ENCODE measurements at regions of chr1 and their contacts with region 1.

Region 1: GRCh38 chr1:175023043-175023921 is at the start of gene MRPS14:
- DNase-seq: peak; percentile 93 to 98 (median 97)
- ATAC-seq: peak; percentile 97
- H3K4me3 ChIP-seq: peak within 1 kb of the TSS; percentile 86
- H3K4me3 Mint-ChIP-seq: peak within 1 kb of the TSS; percentile 86 to 97 (median 92)
- H3K27ac ChIP-seq: peak within 1 kb of the TSS; percentile 92
- H3K27ac Mint-ChIP-seq: peak within 1 kb of the TSS; percentile 84 to 98 (median 90)
- H3K4me1 ChIP-seq: peaks cover 6 to 12% of the 10 kb centered on the region in 2 donors
- H3K4me1 Mint-ChIP-seq: peaks cover 23 to 47% (median 36%) of the 10 kb centered on the region in 7 donors
- H3K27me3 ChIP-seq: no peaks in the 10 kb centered on the region
- H3K27me3 Mint-ChIP-seq: no peaks in the 10 kb centered on the region
- total RNA-seq, gene MRPS14: 12.4 to 36.5 (median 31.5) TPM

Region 2: DNA sequence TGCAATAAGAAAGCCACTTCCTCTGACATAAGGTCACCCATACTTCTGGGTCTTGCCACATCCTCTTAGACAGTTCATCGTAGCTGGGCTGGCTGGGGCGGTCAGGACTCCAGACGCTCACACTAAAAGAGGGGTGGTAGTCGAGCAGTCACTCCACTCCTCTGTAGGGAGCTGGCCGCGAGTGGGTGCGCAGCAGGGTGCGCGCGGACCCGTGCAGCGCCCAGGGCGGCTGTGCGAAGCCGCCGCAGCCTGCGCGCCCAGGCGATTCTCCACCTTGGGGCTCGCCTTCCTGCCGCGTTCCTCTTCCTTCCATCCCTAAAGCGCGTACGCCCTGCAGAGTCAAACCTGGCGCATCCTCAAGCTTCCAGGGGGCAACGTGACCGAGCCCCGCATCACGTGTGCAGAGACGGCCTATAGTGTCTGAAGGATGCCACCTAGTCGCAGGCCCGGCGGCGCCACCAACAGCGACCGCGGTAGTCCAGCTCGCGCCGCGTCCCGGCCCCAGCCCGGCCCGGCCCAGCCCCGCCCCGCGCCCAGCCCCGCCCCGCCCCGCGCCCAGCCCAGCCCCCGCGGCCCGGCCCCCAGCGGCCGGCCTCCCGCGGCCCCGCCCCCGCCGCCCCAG is 1546.5 kb before region 1 on chr1:
- CTCF ChIA-PET with region 1: no interaction called
- POLR2A ChIA-PET with region 1: interaction called, 6 read pairs
- intact Hi-C with region 1: loop called in 1 of 2 experiments (anchors 2 kb)
- DNase-seq: peak; percentile 65 to 82 (median 78)
- ATAC-seq: peak; percentile 87
- H3K4me3 ChIP-seq: peak overlapping the region; percentile 92
- H3K4me3 Mint-ChIP-seq: peak overlapping the region; percentile 82 to 94 (median 91)
- H3K27ac ChIP-seq: peak overlapping the region; percentile 78
- H3K27ac Mint-ChIP-seq: peak overlapping the region; percentile 61 to 96 (median 89)
- H3K4me1 ChIP-seq: peaks cover 20 to 31% of the 10 kb centered on the region in 2 donors
- H3K4me1 Mint-ChIP-seq: peaks cover 38 to 72% (median 63%) of the 10 kb centered on the region in 7 donors
- H3K27me3 ChIP-seq: no peaks in the 10 kb centered on the region
- H3K27me3 Mint-ChIP-seq: no peaks in the 10 kb centered on the region

Region 3: GRCh38 chr1:173867753-173868265 is 1155.5 kb before region 1 on chr1 and contains the start of gene GAS5:
- CTCF ChIA-PET with region 1: no interaction called
- POLR2A ChIA-PET with region 1: interaction called, 5 read pairs
- intact Hi-C with region 1: loop called (anchors 1 kb)
- DNase-seq: peak; percentile 88 to 100 (median 99)
- ATAC-seq: peak; percentile 92
- H3K4me3 ChIP-seq: peak within 1 kb of the TSS; percentile 88
- H3K4me3 Mint-ChIP-seq: peak within 1 kb of the TSS; percentile 92 to 98 (median 95)
- H3K27ac ChIP-seq: peak within 1 kb of the TSS; percentile 93
- H3K27ac Mint-ChIP-seq: peak within 1 kb of the TSS; percentile 85 to 99 (median 97)
- H3K4me1 ChIP-seq: peaks cover 42 to 62% of the 10 kb centered on the region in 2 donors
- H3K4me1 Mint-ChIP-seq: peaks cover 50 to 80% (median 66%) of the 10 kb centered on the region in 7 donors
- H3K27me3 ChIP-seq: no peaks in the 10 kb centered on the region
- H3K27me3 Mint-ChIP-seq: peaks cover 0 to 4% (median 0%) of the 10 kb centered on the region in 5 donors
- total RNA-seq, gene GAS5: 371 to 954 (median 885) TPM

Region 4: DNA sequence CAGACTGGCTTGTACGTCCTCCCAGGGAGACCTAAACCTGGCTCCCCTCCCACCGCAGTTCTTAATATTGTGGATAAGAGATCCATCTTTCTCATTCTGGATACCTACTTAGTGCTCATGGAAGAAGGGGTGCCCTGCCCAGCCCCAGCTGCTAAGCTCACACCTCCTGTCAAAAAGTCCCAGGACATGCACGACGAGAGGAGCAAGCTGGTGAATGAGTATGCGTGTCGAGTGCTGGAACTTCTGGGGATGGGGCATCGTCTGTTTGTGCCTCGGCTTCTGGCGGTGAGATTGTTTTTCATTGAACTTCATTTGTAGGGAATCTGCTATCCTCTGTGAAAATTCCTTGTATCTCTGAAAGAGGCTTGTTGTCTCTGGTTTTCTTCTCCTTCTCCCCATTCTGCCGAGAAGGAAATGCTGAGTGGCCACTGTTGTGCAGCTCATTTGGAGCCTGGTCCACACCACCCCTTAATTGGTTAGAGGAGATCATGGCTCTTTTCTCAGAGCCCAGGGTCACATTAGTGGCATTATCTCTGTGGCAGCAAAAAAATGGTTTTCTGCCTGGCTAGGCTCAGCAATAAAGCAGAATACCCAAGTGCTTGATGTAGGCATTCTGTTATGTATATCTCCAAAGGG is 222.9 kb before region 1 on chr1:
- CTCF ChIA-PET with region 1: interaction called, 3 read pairs
- POLR2A ChIA-PET with region 1: interaction called, 17 read pairs
- intact Hi-C with region 1: loop called (anchors 1 kb)
- DNase-seq: peak in 4 of 9 donors; percentile 2 to 29 (median 16)
- ATAC-seq: peak; percentile 7
- H3K4me3 ChIP-seq: peak overlapping the region; percentile 73
- H3K4me3 Mint-ChIP-seq: no peak overlapping the region
- H3K27ac ChIP-seq: peak overlapping the region; percentile 81
- H3K27ac Mint-ChIP-seq: no peak overlapping the region
- H3K4me1 ChIP-seq: peaks cover 7 to 9% of the 10 kb centered on the region in 2 donors
- H3K4me1 Mint-ChIP-seq: peaks cover 0 to 18% (median 6%) of the 10 kb centered on the region in 7 donors
- H3K27me3 ChIP-seq: no peaks in the 10 kb centered on the region
- H3K27me3 Mint-ChIP-seq: no peaks in the 10 kb centered on the region

Region 5: GRCh38 chr1:174958396-174958795 is 64.9 kb before region 1 on chr1:
- CTCF ChIA-PET with region 1: no interaction called
- POLR2A ChIA-PET with region 1: no interaction called
- intact Hi-C with region 1: no loop called
- DNase-seq: no peak
- ATAC-seq: no peak
- H3K4me3 ChIP-seq: no peak overlapping the region
- H3K4me3 Mint-ChIP-seq: peak overlapping the region in 4 of 10 donors; percentile 4 to 60 (median 16)
- H3K27ac ChIP-seq: no peak overlapping the region
- H3K27ac Mint-ChIP-seq: peak overlapping the region in 5 of 9 donors; percentile 2 to 86 (median 54)
- H3K4me1 ChIP-seq: peaks cover 4 to 19% of the 10 kb centered on the region in 2 donors
- H3K4me1 Mint-ChIP-seq: peaks cover 19 to 46% (median 36%) of the 10 kb centered on the region in 7 donors
- H3K27me3 ChIP-seq: no peaks in the 10 kb centered on the region
- H3K27me3 Mint-ChIP-seq: no peaks in the 10 kb centered on the region

Region 6: DNA sequence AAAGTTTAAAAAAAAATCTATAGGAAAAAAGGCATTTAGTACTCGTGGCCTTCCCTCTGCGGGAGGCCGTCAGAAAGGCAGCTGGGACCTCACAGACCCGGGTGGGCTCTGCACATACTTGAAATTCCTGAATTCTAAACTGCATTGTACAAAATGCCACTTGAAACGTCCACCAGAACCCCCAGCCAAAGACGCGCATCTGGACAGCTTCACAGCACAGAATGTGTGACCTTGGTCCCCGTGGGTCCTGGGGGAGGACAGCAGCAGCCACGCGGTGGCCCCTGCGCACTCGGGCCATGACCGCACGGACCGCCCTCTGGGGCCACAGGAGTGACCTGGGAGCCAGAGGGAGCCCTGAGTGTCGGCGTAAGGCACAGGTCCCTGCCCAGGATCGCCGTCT is 20.5 kb after region 1 on chr1:
- CTCF ChIA-PET with region 1: no interaction called
- POLR2A ChIA-PET with region 1: no interaction called
- intact Hi-C with region 1: no loop called
- DNase-seq: no peak
- ATAC-seq: no peak
- H3K4me3 ChIP-seq: no peak overlapping the region
- H3K4me3 Mint-ChIP-seq: no peak overlapping the region
- H3K27ac ChIP-seq: no peak overlapping the region
- H3K27ac Mint-ChIP-seq: no peak overlapping the region
- H3K4me1 ChIP-seq: no peaks in the 10 kb centered on the region
- H3K4me1 Mint-ChIP-seq: peaks cover 0 to 2% (median 0%) of the 10 kb centered on the region in 7 donors
- H3K27me3 ChIP-seq: no peaks in the 10 kb centered on the region
- H3K27me3 Mint-ChIP-seq: peaks cover 0 to 24% (median 15%) of the 10 kb centered on the region in 5 donors

Region 7: DNA sequence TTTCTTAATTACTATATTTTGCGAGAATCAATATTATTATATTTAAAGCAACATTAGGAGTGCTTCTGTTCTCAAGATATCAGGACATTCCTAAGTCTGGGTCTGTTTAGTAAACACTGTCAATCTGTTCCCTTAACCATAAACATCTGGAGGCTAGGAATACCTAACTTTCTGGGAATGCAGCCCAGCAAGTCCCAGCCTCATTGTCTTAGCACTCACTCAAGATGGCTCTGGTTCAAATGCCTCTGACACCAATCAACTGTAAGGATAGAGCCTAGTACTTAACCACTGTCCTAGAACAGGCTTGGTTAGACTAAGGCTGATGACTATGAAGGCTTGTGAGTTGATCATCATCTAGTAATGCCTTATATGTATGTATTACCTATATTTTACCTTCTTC is 105.9 kb after region 1 on chr1:
- CTCF ChIA-PET with region 1: interaction called, 59 read pairs
- POLR2A ChIA-PET with region 1: no interaction called
- intact Hi-C with region 1: no loop called
- DNase-seq: no peak
- ATAC-seq: no peak
- H3K4me3 ChIP-seq: no peak overlapping the region
- H3K4me3 Mint-ChIP-seq: no peak overlapping the region
- H3K27ac ChIP-seq: no peak overlapping the region
- H3K27ac Mint-ChIP-seq: no peak overlapping the region
- H3K4me1 ChIP-seq: no peaks in the 10 kb centered on the region
- H3K4me1 Mint-ChIP-seq: peaks cover 0 to 3% (median 0%) of the 10 kb centered on the region in 7 donors
- H3K27me3 ChIP-seq: no peaks in the 10 kb centered on the region
- H3K27me3 Mint-ChIP-seq: peaks cover 0 to 5% (median under 1%) of the 10 kb centered on the region in 5 donors

Region 8: DNA sequence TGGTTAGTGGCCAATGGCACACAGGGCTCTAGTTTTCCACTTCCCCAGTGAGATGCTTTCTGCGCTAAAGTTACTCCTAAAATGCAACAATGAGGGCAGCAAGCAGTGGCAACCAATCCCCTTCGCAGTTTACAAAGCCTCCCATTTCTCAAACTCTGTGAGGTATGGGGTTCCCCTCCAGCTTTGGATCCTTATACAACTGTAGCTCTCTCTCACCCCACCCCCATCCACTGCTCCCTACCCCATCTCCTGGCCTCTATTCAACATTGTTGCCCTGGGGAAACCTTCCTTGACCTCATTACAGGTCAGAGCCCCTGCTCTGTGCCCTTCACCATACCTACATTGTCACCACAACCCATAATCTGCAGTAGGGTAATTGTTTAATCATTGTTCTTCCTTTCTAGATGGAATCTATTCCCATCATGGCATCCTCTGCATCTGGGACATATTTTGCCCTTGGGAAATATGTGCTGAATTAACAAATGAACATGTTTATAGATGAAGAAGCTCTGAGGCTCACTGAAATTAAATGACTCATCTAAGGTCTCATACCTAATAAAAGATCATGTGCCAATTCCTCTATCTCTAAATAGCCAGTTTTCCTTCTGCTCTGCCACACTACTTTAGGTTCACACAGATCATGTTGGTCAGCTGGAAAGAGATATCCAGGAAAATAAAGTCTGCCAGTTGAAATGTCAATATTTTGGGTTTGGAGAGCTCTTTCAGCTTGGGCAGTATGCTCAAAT is 156.7 kb after region 1 on chr1:
- CTCF ChIA-PET with region 1: no interaction called
- POLR2A ChIA-PET with region 1: no interaction called
- intact Hi-C with region 1: no loop called
- DNase-seq: no peak
- ATAC-seq: no peak
- H3K4me3 ChIP-seq: no peak overlapping the region
- H3K4me3 Mint-ChIP-seq: peak overlapping the region in 2 of 10 donors; percentile 12 to 42
- H3K27ac ChIP-seq: no peak overlapping the region
- H3K27ac Mint-ChIP-seq: peak overlapping the region in 5 of 9 donors; percentile 18 to 71 (median 62)
- H3K4me1 ChIP-seq: peaks cover 20 to 37% of the 10 kb centered on the region in 2 donors
- H3K4me1 Mint-ChIP-seq: peaks cover 46 to 88% (median 85%) of the 10 kb centered on the region in 7 donors
- H3K27me3 ChIP-seq: no peaks in the 10 kb centered on the region
- H3K27me3 Mint-ChIP-seq: no peaks in the 10 kb centered on the region

Region 9: GRCh38 chr1:175319418-175320230 is 296.3 kb after region 1 on chr1:
- CTCF ChIA-PET with region 1: no interaction called
- POLR2A ChIA-PET with region 1: no interaction called
- intact Hi-C with region 1: loop called in 1 of 2 experiments (anchors 2 kb)
- DNase-seq: peak; percentile 45 to 71 (median 62)
- ATAC-seq: peak; percentile 91
- H3K4me3 ChIP-seq: no peak overlapping the region
- H3K4me3 Mint-ChIP-seq: peak overlapping the region in 5 of 10 donors; percentile 8 to 44 (median 42)
- H3K27ac ChIP-seq: no peak overlapping the region
- H3K27ac Mint-ChIP-seq: no peak overlapping the region
- H3K4me1 ChIP-seq: peaks cover 4 to 5% of the 10 kb centered on the region in 2 donors
- H3K4me1 Mint-ChIP-seq: peaks cover 4 to 29% (median 18%) of the 10 kb centered on the region in 7 donors
- H3K27me3 ChIP-seq: no peaks in the 10 kb centered on the region
- H3K27me3 Mint-ChIP-seq: peaks cover 0 to 29% (median 5%) of the 10 kb centered on the region in 5 donors

Measured in naive thymus-derived CD4-positive, alpha-beta T cell (primary cell).